ENCODE measurements at regions of chr7 and their contacts with region 1.

Region 1: GRCh38 chr7:85030893-85031292 is 156.0 kb downstream of the SEMA3D start:
- DNase-seq: no peak
- H3K4me3 ChIP-seq: no peak overlapping the region
- H3K27ac ChIP-seq: no peak overlapping the region
- H3K4me1 ChIP-seq: no peaks in the 10 kb centered on the region
- H3K27me3 ChIP-seq: no peaks in the 10 kb centered on the region
- CTCF ChIP-seq: peak in 3 of 4 experiments; percentile 50 to 67 (median 52)
- POLR2A ChIP-seq: no peak

Region 2: DNA sequence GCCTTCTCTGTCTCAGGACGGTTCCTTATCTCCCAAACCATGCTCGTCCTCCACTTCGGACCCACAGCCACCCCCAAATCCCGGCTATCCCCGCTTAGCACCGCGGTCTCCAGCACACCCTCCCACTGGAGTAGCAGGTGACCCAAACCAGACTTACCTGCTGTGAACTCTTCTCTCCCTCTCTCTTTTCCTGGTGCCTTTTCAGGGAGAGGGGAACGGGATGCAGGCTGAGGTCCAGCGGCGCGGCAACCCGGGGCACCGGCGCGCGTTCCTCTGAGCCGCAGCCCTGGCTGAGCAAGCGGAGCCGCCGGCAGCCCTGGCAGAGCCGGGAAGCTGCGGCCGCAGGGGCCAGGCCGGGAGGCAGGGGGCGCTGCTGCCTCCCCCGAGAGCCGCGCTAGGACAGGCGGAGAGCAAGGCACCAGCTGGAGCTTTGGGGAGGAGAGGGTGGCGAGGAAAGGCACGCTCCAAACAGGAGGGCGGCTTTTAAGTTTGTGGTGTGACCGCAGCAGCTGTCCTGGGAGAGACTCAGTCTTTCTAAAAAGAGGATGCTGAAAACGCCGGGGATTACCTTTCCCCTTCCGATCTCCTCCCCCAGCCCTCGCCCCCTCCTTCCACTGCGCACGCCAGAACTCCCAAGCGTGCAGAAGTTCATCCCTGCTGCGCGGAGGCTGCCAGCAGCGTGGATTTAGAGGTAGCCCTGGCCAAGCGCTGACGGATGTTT is 155.8 kb after region 1 on chr7 and contains the start of gene SEMA3D:
- intact Hi-C with region 1: loop called (anchors 10 kb)
- DNase-seq: peak; percentile 66
- H3K4me3 ChIP-seq: peak within 1 kb of the TSS; percentile 43
- H3K27ac ChIP-seq: peak within 1 kb of the TSS; percentile 64 to 68
- H3K4me1 ChIP-seq: no peaks in the 10 kb centered on the region
- H3K27me3 ChIP-seq: no peaks in the 10 kb centered on the region
- CTCF ChIP-seq: peak; percentile 58 to 86 (median 79)
- POLR2A ChIP-seq: no peak
- total RNA-seq, gene SEMA3D: 10.7 to 16.5 TPM